Lower leg skin (tissue), 4 donors: ENCODE measurements at regions of chr20 and their contacts with region 1.

Region 1: GRCh38 chr20:34420146-34420545 is 57.1 kb downstream of the ITCH start:
- DNase-seq: no peak
- H3K4me3 ChIP-seq: no peak overlapping the region
- CTCF ChIP-seq: no peak
- POLR2A ChIP-seq: no peak

Region 2: DNA sequence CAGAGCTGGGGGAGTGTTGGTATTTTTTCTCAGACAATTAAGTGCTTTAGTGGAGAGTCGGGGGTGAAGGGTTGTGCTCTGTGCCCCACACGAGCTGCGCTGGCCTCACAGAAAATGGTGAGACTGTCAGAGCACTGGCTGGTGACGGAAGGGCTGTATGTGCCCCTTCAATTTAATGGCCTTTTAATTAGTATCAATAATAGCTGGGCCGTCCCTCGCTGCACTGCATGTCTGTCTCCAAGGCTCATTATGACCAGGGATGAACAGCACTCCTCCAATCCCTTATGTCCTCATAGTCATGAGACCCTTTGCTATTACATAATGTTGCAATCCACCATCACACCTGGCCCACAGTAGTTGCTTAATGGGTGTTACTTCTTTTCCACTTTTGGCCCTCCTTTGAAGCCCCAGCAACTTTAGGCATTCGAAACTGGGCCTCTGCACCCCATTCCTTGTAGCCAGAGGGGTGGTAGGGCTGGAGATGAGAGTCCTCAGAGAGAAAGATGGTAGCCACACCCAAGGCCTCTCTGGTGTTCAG is 435.9 kb before region 1 on chr20:
- intact Hi-C with region 1: no loop called
- DNase-seq: no peak
- H3K4me3 ChIP-seq: no peak overlapping the region
- CTCF ChIP-seq: no peak
- POLR2A ChIP-seq: no peak

Region 3: DNA sequence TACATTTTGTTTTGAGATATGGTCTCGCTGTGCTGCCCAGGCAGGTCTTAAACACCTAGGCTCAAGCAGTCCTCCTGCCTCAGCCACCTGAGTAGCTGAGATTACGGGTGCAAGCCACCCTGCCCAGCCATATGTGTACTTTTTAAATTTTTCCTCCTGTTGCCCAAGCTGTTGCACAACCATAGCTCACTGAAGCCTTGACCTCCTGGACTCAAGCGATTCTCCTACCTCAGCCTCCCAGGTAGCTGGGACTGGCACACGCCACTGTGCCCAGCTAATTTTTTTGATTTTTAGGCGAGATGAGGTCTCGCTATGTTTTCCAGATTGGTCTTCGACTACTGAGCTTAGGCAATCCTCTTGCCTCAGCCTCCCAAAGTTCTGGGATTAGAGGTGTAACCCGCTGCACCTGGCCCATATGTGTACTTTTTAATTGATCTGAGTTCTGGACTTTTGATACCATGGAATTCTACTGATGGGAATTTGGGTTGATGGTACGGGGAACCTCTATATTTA is 12.1 kb before region 1 on chr20:
- intact Hi-C with region 1: loop called (anchors 2 kb)
- DNase-seq: no peak
- H3K4me3 ChIP-seq: no peak overlapping the region
- CTCF ChIP-seq: no peak
- POLR2A ChIP-seq: no peak